ENCODE measurements at regions of chr5 and their contacts with region 1.

Region 1: DNA sequence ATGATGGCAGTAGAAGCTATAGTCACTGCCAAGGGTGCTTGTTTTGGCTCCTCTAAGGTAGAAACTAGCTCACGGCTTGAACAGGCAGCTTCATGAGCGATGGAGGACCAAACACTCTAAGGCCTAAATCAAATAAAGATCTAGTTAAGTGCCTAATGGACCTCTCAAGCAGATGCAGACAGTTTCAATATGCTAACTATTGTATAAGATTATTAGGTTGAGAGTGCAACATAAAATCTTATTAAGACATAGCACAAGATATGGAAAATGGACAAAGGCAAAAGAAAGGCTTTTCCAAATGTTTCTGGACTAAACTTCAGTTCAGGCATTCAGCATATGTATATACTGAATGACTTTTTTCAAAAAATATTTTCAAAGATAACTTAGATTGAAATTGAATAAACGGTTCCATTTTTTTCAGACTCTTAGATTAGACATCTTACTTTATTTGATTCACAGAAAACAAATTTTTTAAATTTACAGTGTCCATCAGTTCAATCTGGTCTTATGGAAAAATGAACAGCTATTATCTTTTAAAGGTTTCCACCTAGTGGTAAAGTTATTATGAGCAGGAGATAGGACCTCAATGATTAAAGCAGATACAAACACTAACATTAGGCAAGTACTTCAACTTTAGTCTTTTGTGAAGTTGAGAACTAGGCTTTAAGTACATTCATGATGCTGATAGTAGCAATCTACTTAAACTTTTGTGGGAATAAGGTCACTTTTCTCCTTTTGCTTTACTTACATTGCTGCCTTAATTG is 1167.7 kb downstream of the MAT2B start:
- DNase-seq: no peak
- ATAC-seq: no peak
- H3K4me3 ChIP-seq: no peak overlapping the region
- H3K4me3 Mint-ChIP-seq: no peak overlapping the region
- H3K27ac ChIP-seq: no peak overlapping the region
- H3K27ac Mint-ChIP-seq: no peak overlapping the region
- H3K4me1 ChIP-seq: no peaks in the 10 kb centered on the region
- H3K4me1 Mint-ChIP-seq: no peaks in the 10 kb centered on the region
- H3K27me3 ChIP-seq: no peaks in the 10 kb centered on the region
- H3K27me3 Mint-ChIP-seq: no peaks in the 10 kb centered on the region
- CTCF ChIP-seq: no peak

Region 2: DNA sequence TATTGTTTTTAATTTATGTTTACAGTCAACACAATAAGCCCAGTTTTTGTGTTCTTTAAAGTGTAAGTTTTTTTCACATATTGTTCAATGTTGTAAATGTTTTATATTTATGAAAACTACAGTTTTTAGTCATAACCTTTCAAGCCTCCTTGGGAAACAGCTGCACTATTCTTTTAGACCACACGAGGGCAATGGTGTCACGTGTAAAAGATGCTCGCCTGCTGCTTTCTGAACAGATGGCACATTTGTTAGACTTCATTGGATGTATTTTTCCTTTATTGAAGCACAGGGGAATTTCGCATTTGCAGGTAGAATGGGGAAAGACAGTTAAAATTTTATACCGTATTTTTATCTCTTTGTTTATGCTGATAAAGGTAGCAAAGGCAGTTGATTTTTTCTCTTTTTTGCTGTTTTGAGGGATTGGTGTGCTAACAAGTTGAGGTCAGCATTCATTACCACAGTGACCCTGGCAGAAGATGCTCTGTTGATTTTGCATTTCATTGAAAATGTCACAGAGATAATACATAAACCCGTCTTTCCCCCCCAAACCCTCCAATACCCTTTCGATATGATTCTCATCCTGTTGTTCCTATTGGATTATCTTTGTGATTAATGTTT is 1108.7 kb before region 1 on chr5:
- CTCF ChIA-PET with region 1: no interaction called
- POLR2A ChIA-PET with region 1: no interaction called
- intact Hi-C with region 1: loop called (anchors 2 kb)
- DNase-seq: peak; percentile 72
- ATAC-seq: peak; percentile 71
- H3K4me3 ChIP-seq: no peak overlapping the region
- H3K4me3 Mint-ChIP-seq: no peak overlapping the region
- H3K27ac ChIP-seq: no peak overlapping the region
- H3K27ac Mint-ChIP-seq: no peak overlapping the region
- H3K4me1 ChIP-seq: peaks cover 17 to 21% of the 10 kb centered on the region in 2 donors
- H3K4me1 Mint-ChIP-seq: peaks cover 21% of the 10 kb centered on the region
- H3K27me3 ChIP-seq: peaks cover 0 to 33% (median 26%) of the 10 kb centered on the region in 4 experiments
- H3K27me3 Mint-ChIP-seq: peaks cover 61% of the 10 kb centered on the region
- CTCF ChIP-seq: peak; percentile 97

Measured in B cell (primary cell).